SK-N-SH (cell line): ENCODE measurements at regions of chr1 and their contacts with region 1.

Region 1: DNA sequence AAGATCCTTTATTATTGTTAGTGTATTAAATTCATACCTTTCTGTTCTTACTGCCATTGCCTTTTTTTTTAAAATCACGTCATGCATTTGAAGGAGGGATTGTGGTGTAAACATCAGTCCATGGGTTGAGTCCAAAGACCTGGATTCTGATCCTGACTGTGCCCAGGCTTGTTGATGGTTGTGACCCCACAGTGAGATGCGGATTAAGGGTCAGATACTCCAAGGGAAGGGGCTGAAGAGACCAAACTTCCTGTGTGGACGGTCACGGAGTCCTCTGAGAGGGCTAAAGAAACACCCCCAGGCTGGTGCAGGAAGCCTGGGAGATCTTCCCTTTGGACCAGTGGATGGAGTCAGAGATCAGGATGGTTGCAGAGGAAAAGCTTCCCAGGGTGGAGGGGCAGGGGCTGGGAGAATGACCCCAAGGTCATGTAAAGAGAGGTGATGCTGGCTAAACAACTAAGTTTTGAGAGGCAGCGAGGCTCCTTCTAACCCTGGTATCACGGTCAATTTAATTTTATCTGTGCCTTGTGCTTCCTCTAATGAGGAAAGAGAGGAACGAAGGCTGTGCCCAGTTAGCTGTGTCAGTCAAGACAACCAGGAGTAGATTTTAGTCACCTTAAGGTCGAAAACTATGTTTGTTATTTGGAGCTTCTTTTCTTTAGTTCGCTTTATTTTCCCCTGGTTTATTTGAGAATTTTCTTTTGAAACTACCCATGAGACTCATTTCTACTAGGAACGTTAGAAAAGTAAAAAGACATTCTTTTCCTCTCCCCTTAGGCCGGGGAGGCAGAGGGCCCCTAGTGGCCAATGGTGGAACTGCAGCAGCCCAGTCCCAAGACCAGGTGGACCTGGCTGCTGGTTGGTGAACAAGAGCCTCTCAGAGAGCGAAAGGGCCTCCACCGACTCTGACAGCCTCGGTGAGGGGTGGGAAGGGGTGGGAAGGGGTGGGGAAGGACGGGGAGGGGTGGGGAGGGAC is 8.7 kb upstream of the GPR161 start:
- DNase-seq: peak; percentile 93
- H3K4me3 ChIP-seq: peak overlapping the region in 1 of 2 experiments; percentile 42; a peak in 1 of 4 replicates
- H3K27ac ChIP-seq: no peak overlapping the region
- H3K4me1 ChIP-seq: no peaks in the 10 kb centered on the region
- H3K27me3 ChIP-seq: no peaks in the 10 kb centered on the region
- CTCF ChIP-seq: peak; percentile 96
- EP300 ChIP-seq: no peak
- RAD21 ChIP-seq: peak; percentile 62

Region 2: DNA sequence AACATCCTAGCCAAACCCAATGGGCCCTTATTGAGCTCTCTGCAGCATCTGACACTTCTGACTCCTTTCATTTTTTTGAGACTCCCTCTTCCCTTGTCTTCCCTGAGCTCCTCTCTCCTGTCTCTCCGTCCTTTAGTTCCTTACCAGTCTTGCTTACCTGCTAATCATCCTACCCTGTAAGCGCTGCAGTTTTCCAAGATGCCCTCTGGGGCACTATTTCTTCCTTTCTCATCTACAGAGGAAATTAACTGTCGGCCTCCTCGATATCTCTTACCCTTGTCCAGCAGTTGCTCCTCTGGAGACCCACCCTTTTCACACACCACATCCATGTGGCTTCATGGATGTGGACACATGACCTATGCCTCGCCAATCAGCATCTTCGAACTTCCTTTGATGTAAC is 15.5 kb before region 1 on chr1:
- CTCF ChIA-PET with region 1: interaction called, 24 read pairs
- POLR2A ChIA-PET with region 1: no interaction called
- DNase-seq: no peak
- H3K4me3 ChIP-seq: no peak overlapping the region
- H3K27ac ChIP-seq: no peak overlapping the region
- H3K4me1 ChIP-seq: peaks cover 4 to 8% of the 10 kb centered on the region in 2 experiments; a peak in 2 of 4 replicates
- H3K27me3 ChIP-seq: no peaks in the 10 kb centered on the region
- CTCF ChIP-seq: no peak
- EP300 ChIP-seq: no peak
- RAD21 ChIP-seq: no peak

Region 3: DNA sequence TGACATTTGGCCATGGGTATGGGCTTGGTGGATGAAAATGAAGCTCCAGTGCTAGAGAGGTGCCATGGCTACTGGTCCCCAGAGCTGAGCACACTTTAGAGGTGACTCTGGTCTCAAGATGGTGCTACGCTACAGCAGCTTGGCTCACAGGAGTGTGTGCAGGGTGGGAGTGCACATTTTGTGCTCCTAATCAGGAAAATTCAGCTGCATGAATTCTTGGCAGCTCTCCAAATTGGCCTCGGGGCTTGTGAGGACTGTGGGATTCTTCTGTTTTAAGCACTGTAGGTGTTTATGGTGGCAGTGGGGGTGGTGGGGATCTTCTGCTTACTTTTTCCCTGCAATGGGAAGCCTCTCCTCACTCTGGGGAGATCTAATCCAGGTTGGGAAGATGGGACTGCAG is 16.0 kb after region 1 on chr1:
- CTCF ChIA-PET with region 1: interaction called, 20 read pairs
- POLR2A ChIA-PET with region 1: no interaction called
- DNase-seq: peak; percentile 27
- H3K4me3 ChIP-seq: no peak overlapping the region
- H3K27ac ChIP-seq: no peak overlapping the region
- H3K4me1 ChIP-seq: peaks cover 0 to 5% of the 10 kb centered on the region in 2 experiments; a peak in 1 of 4 replicates
- H3K27me3 ChIP-seq: no peaks in the 10 kb centered on the region
- CTCF ChIP-seq: no peak
- EP300 ChIP-seq: no peak
- RAD21 ChIP-seq: no peak

Region 4: DNA sequence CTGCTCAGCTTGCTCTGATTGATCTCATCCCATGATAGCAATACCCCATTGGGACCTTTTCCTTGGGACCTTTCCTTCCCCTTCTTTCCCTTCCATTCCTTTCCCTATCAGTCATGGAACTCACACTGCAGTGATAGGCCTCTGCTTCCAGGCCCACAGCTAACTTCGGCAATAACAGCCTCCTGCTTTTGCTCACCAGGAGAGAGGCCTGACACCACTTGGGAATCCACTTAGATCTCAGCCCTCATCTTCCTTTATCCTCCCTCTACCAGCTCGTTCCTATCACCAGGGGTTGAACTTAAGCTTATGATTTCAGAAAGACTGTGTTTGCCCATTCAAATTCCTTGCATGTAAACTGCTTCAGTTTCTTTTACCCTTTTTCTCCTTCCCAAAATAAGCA is 22.3 kb after region 1 on chr1:
- CTCF ChIA-PET with region 1: interaction called, 20 read pairs
- POLR2A ChIA-PET with region 1: no interaction called
- DNase-seq: no peak
- H3K4me3 ChIP-seq: no peak overlapping the region
- H3K27ac ChIP-seq: no peak overlapping the region
- H3K4me1 ChIP-seq: no peaks in the 10 kb centered on the region
- H3K27me3 ChIP-seq: no peaks in the 10 kb centered on the region
- CTCF ChIP-seq: no peak
- EP300 ChIP-seq: no peak
- RAD21 ChIP-seq: no peak

Region 5: DNA sequence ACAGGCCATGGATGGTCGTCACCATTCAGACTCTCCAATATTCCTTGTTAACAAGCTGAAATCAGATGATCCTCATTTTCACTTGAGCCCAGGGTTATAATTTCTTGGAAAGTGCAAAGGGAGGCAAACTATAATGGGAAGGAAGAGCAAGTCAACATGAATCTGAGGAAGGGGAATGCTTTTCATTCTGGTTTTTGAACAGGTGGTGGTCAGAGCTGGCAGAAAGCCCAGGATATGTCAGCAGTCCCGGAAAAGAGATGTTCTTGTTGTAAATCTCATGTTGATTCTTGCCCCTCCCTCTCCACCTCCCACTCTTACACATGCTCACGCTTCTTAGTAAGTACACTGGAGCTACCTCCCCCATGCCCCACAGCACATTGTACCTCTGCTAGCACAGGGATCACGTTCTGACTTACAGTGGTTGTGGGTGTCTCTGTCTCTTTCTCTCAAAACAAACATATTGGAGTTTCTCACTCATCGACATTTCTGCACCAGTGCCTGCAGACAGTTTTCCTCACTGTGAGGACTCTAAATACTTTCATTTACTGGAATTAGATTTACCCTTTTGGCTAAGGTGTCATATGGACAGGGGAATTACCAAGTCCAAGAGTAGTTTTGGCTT is 320.7 kb after region 1 on chr1:
- CTCF ChIA-PET with region 1: no interaction called
- POLR2A ChIA-PET with region 1: no interaction called
- DNase-seq: peak; percentile 25
- H3K4me3 ChIP-seq: no peak overlapping the region
- H3K27ac ChIP-seq: peak overlapping the region; percentile 95 to 99; a peak in 3 of 4 replicates
- H3K4me1 ChIP-seq: peaks cover 43% of the 10 kb centered on the region in 2 experiments
- H3K27me3 ChIP-seq: no peaks in the 10 kb centered on the region
- CTCF ChIP-seq: no peak
- EP300 ChIP-seq: peak; percentile 75 to 76; a peak in 3 of 4 replicates
- RAD21 ChIP-seq: no peak